Cardiac septum (tissue), 1 donor: ENCODE measurements at regions of chr5 and their contacts with region 1.

Region 1: GRCh38 chr5:81506900-81507588 is 113.1 kb upstream of the ACOT12 start:
- DNase-seq: no peak

Region 2: DNA sequence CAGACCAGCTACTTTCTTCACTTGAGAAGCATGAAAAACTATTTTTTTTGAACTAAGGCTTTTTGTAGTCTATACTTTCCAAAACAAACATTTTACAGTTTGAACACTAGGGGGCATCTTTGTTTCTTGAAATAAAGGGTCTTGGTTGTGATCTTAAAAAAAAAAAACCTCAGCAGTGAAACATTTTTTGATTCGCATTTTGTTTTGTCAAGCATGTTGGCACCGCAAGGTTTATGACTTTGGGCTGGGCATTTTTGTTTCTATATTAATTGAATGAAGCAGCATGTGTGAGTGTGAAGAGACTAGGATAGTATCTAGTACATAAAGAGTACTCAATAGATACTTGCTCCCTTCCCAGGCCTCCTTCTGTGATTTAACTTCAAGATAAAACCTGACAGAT is 81.5 kb before region 1 on chr5:
- intact Hi-C with region 1: loop called (anchors 5 kb)
- DNase-seq: no peak

Region 3: DNA sequence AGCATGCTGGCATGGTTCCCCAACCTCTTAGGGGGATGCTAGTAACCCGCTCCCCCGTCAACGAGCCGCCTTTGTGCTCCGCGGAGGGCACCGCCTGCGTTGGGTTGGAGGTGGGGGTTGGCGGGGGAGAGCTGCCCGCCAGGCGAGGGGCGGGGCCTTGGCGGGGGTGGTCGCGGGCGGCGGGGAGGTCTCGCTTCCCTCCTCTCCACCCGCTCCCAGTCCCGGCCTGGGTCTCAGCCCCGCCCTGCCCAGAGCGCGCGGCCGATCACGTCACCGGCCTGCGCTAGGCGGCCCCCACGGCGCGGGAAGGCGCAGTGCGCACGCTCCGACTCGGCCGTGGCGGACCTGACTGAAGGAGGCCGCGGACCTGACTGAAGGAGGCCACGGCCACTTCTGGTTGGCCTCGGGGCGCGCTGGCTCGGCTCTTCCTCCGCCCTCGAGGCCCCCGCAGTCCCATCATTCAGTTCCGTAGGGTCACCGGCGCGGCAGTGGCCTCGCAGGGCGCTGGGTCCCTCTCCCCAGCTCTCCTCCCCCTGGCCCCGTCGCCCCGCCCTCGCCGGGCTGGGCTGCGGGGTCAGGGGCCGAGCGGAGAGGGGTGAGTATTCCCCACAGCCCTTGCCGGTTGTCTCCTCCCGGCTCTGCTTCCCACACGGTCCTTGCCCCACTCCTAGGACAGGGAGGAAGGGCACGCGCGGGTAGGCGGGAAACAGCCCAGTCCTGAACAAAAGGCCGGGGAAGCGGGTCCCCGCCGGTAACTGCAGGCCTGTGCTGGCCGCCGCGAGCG is 464.9 kb after region 1 on chr5 and contains the start of gene ATG10:
- intact Hi-C with region 1: loop called (anchors 5 kb)
- DNase-seq: peak; percentile 97
- total RNA-seq, gene ATG10: 7.1 TPM

Region 4: DNA sequence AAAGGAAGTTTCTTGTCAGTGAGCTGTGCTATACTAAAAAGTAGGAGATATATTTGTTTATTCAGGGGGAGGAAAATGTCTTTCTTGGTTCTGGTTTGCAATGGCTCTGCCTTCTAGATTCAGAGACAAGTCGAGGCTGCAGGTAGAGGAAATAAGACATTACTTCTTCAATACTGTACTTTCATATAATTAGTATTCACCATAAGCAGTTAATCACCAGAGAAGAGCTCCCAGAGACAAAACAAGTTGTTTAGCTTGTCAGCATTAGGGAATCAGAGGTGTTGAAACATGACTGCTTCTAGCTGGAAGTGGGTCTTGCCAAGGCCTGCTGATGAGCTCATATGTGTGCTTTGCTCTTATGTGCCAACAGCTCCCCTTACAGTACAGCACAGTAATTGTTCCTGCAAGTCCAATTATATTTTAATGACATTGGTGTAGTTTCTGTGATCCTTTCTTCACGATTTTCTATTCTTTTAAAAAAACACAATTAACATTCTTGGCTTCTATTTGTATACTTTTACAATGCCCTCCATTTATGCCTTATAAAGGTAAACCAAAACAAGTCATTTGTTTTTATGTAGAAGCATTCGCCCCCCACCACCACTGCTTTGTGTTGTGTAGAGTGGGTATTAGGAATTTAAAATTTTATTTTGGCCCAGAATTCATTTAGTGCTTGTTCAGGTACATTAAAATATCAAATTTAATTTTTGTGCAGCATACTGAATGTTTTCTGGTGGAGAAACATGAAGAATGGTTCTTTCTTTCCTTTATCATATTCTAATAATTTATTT is 658.9 kb after region 1 on chr5:
- intact Hi-C with region 1: loop called (anchors 5 kb)
- DNase-seq: no peak